ENCODE measurements at regions of chr1 and their contacts with region 1.

Region 1: DNA sequence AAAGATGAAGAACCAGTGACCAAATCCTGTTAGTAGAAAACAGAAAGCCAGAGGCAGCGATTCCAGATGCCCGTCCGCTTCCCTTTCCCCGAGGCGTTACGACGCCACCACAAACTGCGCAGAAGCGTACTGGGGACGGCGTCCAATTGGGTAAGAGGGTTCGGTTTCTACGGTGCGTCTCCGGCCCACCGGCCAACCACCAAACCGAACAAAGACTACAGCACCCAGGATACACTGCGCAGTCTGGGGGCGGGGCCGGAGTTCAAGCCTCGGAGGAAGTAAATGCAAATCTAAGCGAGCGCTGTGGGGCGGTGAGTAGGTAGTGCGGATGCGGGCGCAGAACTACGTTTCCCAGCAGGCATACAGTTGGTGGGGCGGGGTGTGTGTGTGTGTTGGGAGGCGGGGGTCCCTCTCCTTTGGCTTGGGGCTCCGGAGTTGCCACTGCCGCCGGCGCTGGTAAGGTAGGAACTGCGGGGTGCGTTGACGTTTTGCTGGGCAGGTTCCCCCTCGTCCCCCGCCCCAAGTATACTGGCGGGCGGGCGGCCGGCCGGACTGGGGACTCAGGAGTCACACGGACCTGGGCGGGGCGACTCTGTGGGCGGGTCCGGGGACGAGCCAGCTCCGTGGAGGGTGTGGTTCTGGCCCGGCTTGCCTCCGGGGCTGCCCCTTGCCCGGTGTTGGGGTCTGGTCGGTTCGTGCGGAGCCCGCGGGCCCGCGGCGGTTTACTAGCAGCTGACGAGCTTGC is at the starts of genes SWT1 and TRMT1L:
- DNase-seq: peak; percentile 100
- H3K4me3 ChIP-seq: peak within 1 kb of the TSS; percentile 79 to 92 (median 85)
- H3K27ac ChIP-seq: peak within 1 kb of the TSS; percentile 97 to 99 (median 99)
- H3K4me1 ChIP-seq: peaks cover 0 to 34% (median 24%) of the 10 kb centered on the region in 4 donors
- H3K27me3 ChIP-seq: no peaks in the 10 kb centered on the region
- CTCF ChIP-seq: no peak
- EP300 ChIP-seq: peak in 1 of 4 donors; percentile 39
- POLR2A ChIP-seq: peak; percentile 99 to 100
- total RNA-seq, gene SWT1: 6.8 to 12.7 (median 11.7) TPM
- total RNA-seq, gene TRMT1L: 6.9 to 18.6 (median 14.6) TPM

Region 2: GRCh38 chr1:184754476-184755225 is 402.4 kb before region 1 on chr1 and contains the start of gene EDEM3:
- intact Hi-C with region 1: loop called (anchors 2 kb)
- DNase-seq: peak; percentile 100
- H3K4me3 ChIP-seq: peak within 1 kb of the TSS; percentile 80 to 96 (median 93)
- H3K27ac ChIP-seq: peak within 1 kb of the TSS; percentile 93 to 98 (median 96)
- H3K4me1 ChIP-seq: peaks cover 0 to 24% (median 15%) of the 10 kb centered on the region in 4 donors
- H3K27me3 ChIP-seq: no peaks in the 10 kb centered on the region
- CTCF ChIP-seq: no peak
- EP300 ChIP-seq: no peak
- POLR2A ChIP-seq: peak; percentile 92 to 97
- total RNA-seq, gene EDEM3: 21.4 to 29.3 (median 25.6) TPM

Region 3: DNA sequence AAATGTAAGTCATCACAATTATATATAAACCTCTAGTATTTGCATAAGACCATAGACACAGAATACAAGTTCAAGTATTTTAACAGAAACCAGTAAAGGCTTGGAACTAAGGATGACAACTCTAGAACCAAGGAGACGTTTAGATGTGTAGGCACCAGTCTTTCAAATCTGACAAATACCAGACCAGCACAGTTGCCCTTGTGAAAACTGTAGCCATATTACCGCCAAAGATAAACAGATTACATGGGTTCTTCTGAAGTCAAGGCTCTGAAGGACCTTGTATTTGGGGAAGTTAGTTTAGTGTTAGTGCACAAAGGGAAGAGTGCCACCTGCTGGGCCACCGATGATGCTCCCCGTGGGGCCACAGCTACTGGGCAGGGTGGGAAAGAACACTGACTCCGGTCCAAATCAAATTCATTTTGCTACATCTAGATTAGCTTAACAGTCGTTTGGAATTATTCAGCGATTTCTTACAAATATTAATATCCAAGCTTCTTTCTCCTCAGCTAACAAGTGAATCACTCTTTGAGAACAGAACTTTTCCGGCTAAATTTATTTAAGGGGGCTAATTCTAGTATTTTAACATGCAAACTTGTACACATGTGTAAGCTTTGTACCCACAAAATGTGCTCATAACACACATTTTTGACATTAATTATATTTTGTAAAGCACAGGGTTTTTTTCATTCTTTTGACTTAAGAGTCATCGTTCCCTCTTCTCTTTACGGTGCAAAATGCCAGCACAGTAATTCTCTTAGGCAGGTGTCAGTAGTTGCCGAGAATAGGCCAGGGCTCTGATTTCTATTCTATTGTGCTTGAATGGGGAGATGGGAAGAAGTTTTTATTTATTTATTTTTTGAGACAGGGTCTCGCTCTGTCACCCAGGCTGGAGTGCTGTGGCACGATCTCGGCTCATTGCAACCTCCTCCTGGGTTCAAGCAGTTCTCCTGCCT is 174.7 kb before region 1 on chr1:
- intact Hi-C with region 1: loop called (anchors 10 kb)
- DNase-seq: peak; percentile 91
- H3K4me3 ChIP-seq: no peak overlapping the region
- H3K27ac ChIP-seq: peak overlapping the region in 1 of 4 donors; percentile 55
- H3K4me1 ChIP-seq: peaks cover 0 to 10% (median 4%) of the 10 kb centered on the region in 4 donors
- H3K27me3 ChIP-seq: no peaks in the 10 kb centered on the region
- CTCF ChIP-seq: peak; percentile 87 to 91 (median 89)
- EP300 ChIP-seq: no peak
- POLR2A ChIP-seq: no peak

Region 4: DNA sequence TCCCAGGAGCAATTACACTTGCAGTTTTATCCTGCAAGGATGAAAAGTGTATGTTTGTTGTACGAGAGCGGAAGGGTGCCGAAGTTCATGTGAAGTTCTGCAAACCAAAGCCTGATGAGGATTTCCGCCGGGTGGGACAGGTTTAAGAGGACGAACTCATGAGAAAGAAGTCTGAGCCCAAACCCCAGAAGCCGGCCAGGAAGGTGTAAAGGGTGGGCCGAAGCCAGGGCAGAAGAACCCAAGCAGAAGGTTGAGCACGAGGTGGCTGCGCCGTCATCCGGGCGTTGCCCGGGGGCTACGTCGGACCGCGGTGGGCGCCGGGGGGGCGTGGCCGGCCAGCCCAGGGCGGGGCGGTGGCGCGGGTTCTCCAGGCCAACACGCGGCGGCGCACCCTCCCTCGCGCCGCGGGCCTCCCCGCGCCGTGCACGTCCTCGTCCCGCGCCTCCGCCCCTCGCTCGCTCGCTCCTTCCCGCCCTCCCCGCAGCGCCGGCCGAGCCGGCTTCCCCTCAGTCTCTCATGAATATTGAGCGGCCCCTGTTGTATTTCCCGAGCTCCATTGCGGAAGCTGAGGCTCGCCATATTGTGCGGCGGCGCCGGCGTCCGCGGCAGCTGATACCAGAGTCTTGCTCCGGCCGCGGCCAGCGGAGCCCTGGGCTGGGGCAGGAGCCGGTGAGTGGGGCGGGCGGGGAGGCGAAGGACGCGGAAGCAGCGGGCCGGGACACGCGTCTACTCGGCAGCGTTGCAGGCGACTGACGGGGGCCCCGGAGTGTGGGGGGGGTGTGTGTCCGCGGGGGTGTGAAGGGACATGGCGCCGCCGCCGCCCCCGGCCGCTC is 111.8 kb before region 1 on chr1 and contains the start of gene RNF2:
- intact Hi-C with region 1: loop called (anchors 5 kb)
- DNase-seq: peak; percentile 89
- H3K4me3 ChIP-seq: peak within 1 kb of the TSS; percentile 82 to 93 (median 88)
- H3K27ac ChIP-seq: peak within 1 kb of the TSS; percentile 90 to 96 (median 92)
- H3K4me1 ChIP-seq: peaks cover 0 to 19% (median 16%) of the 10 kb centered on the region in 4 donors
- H3K27me3 ChIP-seq: no peaks in the 10 kb centered on the region
- CTCF ChIP-seq: no peak
- EP300 ChIP-seq: no peak
- POLR2A ChIP-seq: no peak
- total RNA-seq, gene RNF2: 11.1 to 17.1 (median 16.7) TPM

Region 5: DNA sequence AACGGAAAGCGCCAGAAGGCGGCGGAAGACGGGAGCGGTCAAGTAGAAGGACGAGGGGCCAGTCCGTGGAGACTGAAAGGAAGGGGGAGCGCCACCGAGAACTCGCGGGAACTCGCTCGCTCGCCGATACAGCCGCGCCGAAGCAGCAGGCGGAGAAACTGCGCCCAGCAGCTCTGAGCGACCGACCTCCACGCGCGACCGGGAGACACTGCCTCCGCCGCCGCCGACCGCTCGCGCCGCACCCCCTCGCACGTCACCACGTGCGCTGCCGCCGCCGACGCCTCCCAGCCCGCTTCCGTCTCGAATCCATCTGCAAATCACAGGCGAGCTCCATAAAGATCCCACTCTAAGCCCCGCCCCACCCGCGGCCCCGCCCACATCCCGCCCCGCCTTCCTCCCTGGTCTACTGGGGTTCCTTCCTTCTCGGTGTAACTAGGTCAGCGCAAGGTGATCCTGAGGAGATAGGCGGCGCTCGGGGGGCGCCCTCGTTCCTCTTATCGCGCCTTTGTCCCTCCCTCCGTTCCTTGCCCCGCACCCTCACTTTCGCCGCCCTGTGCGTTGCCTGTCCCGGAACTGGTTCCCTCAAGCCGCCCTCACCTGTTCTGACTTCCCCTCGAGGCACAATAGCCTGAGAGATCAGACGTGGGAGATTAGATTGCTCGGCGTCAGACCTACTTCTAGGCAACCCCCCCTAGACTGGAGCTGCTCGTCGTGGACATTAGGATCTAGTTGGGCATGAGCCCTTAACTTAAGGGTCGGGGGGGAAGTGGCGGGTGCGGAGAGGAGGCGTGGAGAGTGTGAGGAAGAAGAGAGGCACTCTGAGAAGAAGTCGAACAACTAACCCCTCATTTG is 160.2 kb after region 1 on chr1 and contains the start of gene IVNS1ABP:
- intact Hi-C with region 1: loop called (anchors 2 kb)
- DNase-seq: peak; percentile 97
- H3K4me3 ChIP-seq: peak within 1 kb of the TSS; percentile 82 to 91 (median 86)
- H3K27ac ChIP-seq: peak within 1 kb of the TSS; percentile 95 to 98 (median 96)
- H3K4me1 ChIP-seq: peaks cover 0 to 43% (median 35%) of the 10 kb centered on the region in 4 donors
- H3K27me3 ChIP-seq: no peaks in the 10 kb centered on the region
- CTCF ChIP-seq: no peak
- EP300 ChIP-seq: no peak
- POLR2A ChIP-seq: peak; percentile 93 to 95
- total RNA-seq, gene IVNS1ABP: 29.8 to 36.0 (median 31.2) TPM